IMR-90 (cell line): ENCODE measurements at regions of chr2 and their contacts with region 1.

Region 1: GRCh38 chr2:237026981-237027711 is 58.5 kb upstream of the COPS8 start:
- DNase-seq: peak; percentile 49
- ATAC-seq: peak; percentile 82
- H3K4me3 ChIP-seq: no peak overlapping the region
- H3K27ac ChIP-seq: no peak overlapping the region
- H3K4me1 ChIP-seq: 0 out of 2 replicates have a peak, but pooled peaks cover 2% of the 10 kb centered on the region
- H3K27me3 ChIP-seq: 0 out of 2 replicates have a peak, but pooled peaks cover 2% of the 10 kb centered on the region
- CTCF ChIP-seq: peak; percentile 66
- POLR2A ChIP-seq: no peak
- RAD21 ChIP-seq: peak; percentile 85

Region 2: DNA sequence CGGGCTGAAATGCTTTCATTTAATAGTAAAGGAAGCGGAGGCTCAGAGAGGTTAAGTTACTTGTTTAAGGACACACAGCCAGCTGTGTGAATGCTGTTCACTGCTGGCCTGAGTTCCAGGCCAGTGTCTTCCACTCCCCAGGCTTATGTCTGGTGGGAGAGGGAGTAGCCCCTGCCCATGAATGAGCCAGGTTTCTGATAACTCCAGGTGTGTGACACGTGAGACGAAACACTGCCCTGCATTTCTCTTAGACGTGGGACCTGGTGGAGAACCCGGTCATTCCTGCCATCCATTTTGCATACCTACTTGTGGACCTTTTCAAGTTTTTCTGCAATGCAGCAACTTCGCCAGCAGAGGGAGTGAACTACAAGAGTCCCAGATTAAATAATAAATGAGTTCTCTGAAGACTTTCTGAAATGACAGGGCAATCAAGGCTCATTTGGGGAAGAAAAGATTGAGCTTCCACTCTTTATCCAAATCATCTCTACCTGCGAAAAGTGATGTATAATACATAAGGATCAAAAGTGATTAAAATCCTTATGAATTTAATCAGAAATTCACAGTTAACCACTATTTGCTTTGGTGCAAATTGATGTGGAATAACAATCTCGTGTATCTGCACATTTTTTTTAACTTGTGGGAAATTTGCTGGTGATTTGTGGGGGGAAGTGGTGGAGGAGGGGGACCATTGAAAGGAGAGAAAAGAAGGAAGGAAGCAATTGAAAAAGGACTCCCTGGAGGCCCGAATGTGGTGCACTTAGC is 683.6 kb before region 1 on chr2:
- CTCF ChIA-PET with region 1: interaction called, 9 read pairs
- POLR2A ChIA-PET with region 1: no interaction called
- dilution Hi-C with region 1: no loop called
- in situ Hi-C with region 1: no loop called
- intact Hi-C with region 1: loop called (anchors 2 kb)
- DNase-seq: peak; percentile 75
- ATAC-seq: peak; percentile 84
- H3K4me3 ChIP-seq: no peak overlapping the region
- H3K27ac ChIP-seq: no peak overlapping the region
- H3K4me1 ChIP-seq: no peaks in the 10 kb centered on the region
- H3K27me3 ChIP-seq: peaks cover 4% of the 10 kb centered on the region
- CTCF ChIP-seq: peak; percentile 79
- POLR2A ChIP-seq: no peak
- RAD21 ChIP-seq: peak; percentile 62

Region 3: DNA sequence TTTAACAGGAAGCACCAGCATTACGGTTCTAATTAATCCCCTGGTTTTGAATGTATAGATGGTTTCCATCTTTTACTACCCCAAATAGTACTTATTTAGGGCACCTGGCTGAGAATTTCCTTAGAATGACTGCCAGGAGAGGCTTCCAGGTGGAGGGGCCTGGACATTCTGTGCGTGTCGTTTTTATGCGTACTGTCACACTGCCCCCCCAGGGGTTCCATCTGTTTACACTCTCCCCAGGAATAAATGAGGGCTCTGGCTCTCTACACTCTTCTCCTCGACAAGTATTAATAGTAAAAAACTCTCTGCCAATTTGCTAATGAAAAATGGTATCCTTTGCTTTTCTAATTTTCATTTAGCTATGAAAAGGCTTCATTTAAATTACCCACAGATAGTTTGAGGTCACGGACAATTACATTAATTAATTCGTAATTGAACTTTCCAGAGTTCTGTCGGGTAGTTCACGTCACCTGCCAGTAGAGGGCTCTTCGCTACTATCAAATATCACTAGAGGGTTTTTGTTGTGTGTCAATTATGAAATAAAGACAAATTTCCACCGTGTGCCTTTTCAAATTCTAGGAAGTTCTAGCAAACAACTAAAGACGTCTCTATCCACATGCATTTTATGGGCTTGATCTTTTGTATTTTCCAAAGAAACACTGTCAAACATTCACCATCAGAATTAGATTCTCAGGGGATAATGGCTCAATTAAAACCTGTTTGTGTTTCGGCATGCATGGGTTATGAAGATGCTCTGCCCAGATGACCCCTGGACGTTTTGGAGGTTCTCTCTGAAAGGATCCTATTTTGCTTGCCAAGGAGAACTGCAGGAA is 674.2 kb before region 1 on chr2:
- CTCF ChIA-PET with region 1: interaction called, 9 read pairs
- POLR2A ChIA-PET with region 1: no interaction called
- dilution Hi-C with region 1: no loop called
- in situ Hi-C with region 1: no loop called
- intact Hi-C with region 1: loop called (anchors 1 kb)
- DNase-seq: peak; percentile 29
- ATAC-seq: peak; percentile 72
- H3K4me3 ChIP-seq: no peak overlapping the region
- H3K27ac ChIP-seq: no peak overlapping the region
- H3K4me1 ChIP-seq: no peaks in the 10 kb centered on the region
- H3K27me3 ChIP-seq: peaks cover 7% of the 10 kb centered on the region; the same call in 1 of the 2 replicates
- CTCF ChIP-seq: peak; percentile 83
- POLR2A ChIP-seq: no peak
- RAD21 ChIP-seq: peak; percentile 75

Region 4: GRCh38 chr2:236512902-236513435 is 514.2 kb before region 1 on chr2:
- CTCF ChIA-PET with region 1: interaction called, 5 read pairs
- POLR2A ChIA-PET with region 1: no interaction called
- dilution Hi-C with region 1: no loop called
- in situ Hi-C with region 1: no loop called
- intact Hi-C with region 1: loop called (anchors 1 kb)
- DNase-seq: peak; percentile 34
- ATAC-seq: peak; percentile 89
- H3K4me3 ChIP-seq: no peak overlapping the region
- H3K27ac ChIP-seq: no peak overlapping the region
- H3K4me1 ChIP-seq: no peaks in the 10 kb centered on the region
- H3K27me3 ChIP-seq: peaks cover 7% of the 10 kb centered on the region
- CTCF ChIP-seq: peak; percentile 55
- POLR2A ChIP-seq: no peak
- RAD21 ChIP-seq: peak; percentile 58

Region 5: GRCh38 chr2:236569573-236569973 is 457.6 kb before region 1 on chr2 and contains the start of gene ACKR3:
- CTCF ChIA-PET with region 1: no interaction called
- POLR2A ChIA-PET with region 1: no interaction called
- dilution Hi-C with region 1: no loop called
- in situ Hi-C with region 1: no loop called
- intact Hi-C with region 1: loop called (anchors 5 kb)
- DNase-seq: peak; percentile 24
- ATAC-seq: peak; percentile 85
- H3K4me3 ChIP-seq: no peak within 1 kb of the TSS
- H3K27ac ChIP-seq: no peak within 1 kb of the TSS
- H3K4me1 ChIP-seq: no peaks in the 10 kb centered on the region; the same call in 1 of the 2 replicates
- H3K27me3 ChIP-seq: peaks cover 61% of the 10 kb centered on the region
- CTCF ChIP-seq: 0 out of 2 replicates have a peak, but pooled peaks have one; percentile 10
- POLR2A ChIP-seq: no peak
- RAD21 ChIP-seq: no peak
- total RNA-seq, gene ACKR3: not detected in 2 replicates

Region 6: DNA sequence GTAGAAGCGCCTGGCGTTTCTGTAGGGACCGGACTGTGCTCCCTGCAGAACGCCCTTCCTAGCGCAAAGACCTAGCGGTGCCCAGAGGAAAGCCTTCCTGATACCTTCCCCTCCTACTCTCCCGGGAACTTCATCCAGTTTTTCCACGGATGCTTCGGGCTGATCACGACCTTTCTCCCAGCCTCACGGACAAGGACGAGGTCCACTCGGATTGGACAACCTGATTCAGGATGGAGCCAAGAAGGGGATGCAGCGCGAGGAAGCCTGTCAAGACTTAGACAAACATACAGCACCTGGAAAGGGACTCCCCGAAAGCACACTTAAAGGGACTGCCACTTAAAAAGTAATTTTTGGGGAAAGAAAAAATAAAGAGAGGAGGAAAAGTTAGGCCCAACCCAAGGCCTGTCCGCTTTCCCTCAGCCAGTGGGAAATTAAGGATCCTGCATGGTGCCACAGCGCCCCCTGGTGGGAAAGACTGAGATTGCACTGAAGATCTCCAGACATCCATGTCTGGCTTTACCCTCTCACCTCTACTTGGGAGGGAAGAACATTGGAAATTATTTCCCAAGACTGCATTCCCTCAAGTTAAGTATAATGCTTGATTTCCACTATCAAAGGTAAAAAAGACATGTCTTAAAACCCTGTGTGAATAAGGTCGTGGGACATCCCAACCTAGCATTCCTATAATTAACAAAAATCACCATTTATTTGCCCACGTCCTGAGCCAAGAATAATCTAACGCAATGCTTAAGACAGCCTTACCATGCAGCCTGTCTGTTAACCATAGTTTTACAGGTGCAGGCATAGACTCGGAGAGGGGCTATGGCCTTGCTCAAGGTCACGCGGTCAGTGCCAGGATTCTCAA is 45.2 kb after region 1 on chr2:
- CTCF ChIA-PET with region 1: no interaction called
- POLR2A ChIA-PET with region 1: interaction called, 20 read pairs
- dilution Hi-C with region 1: no loop called
- in situ Hi-C with region 1: no loop called
- intact Hi-C with region 1: no loop called
- DNase-seq: peak; percentile 61
- ATAC-seq: 0 out of 2 replicates have a peak, but pooled peaks have one; percentile 21
- H3K4me3 ChIP-seq: no peak overlapping the region
- H3K27ac ChIP-seq: no peak overlapping the region
- H3K4me1 ChIP-seq: peaks cover 20% of the 10 kb centered on the region
- H3K27me3 ChIP-seq: no peaks in the 10 kb centered on the region
- CTCF ChIP-seq: peak; percentile 90
- POLR2A ChIP-seq: no peak
- RAD21 ChIP-seq: peak; percentile 83

Region 7: DNA sequence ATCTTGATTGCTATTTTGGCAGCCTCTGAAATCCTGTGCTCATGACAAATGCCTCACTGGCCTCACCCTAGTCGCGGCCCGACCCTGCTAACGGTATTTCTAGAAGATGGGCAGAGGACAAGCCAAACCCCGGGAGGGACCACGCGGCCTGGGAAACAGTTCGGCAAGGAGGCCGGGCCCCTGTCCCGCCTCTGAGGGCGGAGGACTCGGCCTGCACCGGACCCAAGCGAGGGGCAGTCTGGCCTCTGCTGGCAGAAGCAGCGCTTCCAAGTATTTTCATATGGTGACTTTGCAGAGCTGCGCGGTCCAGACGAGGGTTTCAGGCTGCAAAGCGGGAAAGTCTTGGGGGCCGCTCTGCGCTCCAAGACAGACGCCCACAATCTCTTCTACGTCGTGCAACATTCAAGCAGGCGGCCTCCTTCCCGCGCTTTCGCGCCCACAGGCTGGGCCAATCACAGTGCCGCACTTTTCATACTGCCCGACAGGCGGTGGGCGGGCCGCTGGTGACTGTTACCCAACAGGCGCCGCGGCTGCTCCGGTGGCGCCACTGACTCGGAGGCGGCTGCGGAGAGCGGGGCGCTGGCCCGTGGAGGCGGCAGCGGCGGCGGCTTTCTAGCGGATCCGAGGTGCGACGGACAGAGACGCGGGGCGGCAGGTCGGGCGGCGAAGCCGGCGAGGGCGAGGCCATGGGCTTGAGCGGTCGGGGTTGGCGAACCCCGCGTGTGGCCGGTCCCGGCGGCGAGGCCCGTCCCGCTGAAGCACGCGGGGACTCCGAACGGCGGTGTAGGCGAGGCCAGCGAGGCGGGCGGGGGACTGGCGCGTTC is 771.3 kb after region 1 on chr2 and contains the start of gene RBM44:
- CTCF ChIA-PET with region 1: no interaction called
- POLR2A ChIA-PET with region 1: no interaction called
- dilution Hi-C with region 1: no loop called
- in situ Hi-C with region 1: no loop called
- intact Hi-C with region 1: no loop called
- DNase-seq: no peak
- ATAC-seq: no peak
- H3K4me3 ChIP-seq: no peak within 1 kb of the TSS
- H3K27ac ChIP-seq: no peak within 1 kb of the TSS
- H3K4me1 ChIP-seq: no peaks in the 10 kb centered on the region
- H3K27me3 ChIP-seq: no peaks in the 10 kb centered on the region
- CTCF ChIP-seq: no peak
- POLR2A ChIP-seq: no peak
- RAD21 ChIP-seq: no peak
- total RNA-seq, gene RBM44: 0.18 and 0.28 TPM in 2 replicates